Posterior cingulate gyrus (tissue), 11 donors: ENCODE measurements at regions of chr22 and their contacts with region 1.

Region 1: DNA sequence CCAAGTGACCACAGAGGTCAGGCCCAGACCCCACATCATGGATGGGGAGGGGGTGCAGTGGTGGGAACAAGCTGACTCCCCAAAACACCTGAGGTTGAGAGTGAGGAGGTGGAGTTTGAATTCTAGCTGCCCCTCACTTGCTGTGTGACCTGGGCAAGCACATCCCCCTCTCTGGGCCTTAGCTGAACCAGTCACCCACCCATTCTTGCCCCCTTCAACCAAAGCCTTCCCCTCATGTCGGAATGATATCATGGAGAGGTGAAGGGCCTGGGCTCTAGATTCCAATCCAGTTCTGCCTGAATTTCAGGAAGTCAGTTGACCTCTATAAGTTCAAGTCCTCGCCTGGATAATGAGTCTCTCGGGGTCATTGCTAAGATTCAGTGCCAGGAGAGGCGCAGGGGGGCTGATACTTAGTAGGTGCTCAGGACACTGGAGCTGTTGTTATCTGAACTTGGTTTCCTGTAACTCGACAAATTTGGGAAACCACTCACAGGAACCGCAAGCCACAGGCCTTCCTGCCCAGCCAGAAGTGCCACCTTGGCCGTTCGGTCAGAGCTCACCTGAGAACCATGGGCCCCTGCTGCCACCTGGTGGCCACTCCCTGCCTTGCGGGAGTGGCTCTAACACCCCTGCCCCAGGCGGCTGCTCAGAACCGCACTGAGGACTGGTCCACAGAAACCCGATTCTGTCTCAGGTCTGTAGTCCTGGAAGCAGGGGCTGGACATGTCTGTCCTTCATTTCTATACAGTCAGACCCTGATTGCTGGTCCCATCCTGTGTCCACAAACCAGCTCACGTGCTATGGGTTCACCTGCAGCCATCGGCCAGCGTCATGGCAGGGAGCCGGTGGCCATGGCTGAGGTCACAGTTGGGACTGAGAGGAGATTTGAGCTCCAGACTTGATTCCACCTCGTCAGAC is 6.9 kb downstream of the CDC42EP1 start:
- DNase-seq: peak; percentile 55 to 96 (median 84)

Region 2: GRCh38 chr22:37545700-37546436 is 21.3 kb before region 1 on chr22:
- intact Hi-C with region 1: loop called (anchors 2 kb)
- DNase-seq: peak in 2 of 10 donors; percentile 38 to 85